BJ (cell line): ENCODE measurements at regions of chr17 and their contacts with region 1.

Region 1: GRCh38 chr17:67212689-67213417 is 32.1 kb downstream of the HELZ start:
- DNase-seq: no peak
- H3K4me3 ChIP-seq: no peak overlapping the region
- H3K27me3 ChIP-seq: no peaks in the 10 kb centered on the region
- CTCF ChIP-seq: no peak

Region 2: DNA sequence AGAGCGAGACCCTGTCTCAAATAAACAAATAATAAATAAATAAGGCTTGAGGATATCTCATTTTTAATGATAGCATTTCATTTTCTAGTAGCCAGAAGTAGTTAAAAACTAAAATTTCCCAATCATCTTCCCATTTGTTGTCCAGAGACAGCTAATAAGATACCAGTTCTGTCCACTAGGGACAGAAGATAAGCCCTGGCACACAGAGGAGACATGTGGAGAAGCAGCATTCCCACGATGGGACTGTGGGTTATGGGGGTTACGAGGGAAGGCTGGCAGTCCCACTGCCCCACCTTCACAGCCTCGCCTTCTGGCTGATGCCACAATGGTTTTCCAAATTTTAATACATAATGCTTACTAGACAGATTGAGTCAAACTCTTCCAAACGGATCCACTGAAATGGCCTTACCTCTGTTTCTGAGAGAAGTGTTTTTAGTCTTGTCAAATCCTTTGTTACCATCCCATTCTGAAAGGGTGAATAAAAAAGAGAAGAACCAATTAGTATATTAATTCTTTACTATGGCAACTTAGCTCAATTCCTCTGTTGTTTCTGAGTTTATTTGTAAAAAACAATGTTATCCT is 12.0 kb before region 1 on chr17:
- CTCF ChIA-PET with region 1: interaction called, 11 read pairs
- POLR2A ChIA-PET with region 1: no interaction called
- DNase-seq: no peak
- H3K4me3 ChIP-seq: no peak overlapping the region
- H3K27me3 ChIP-seq: no peaks in the 10 kb centered on the region
- CTCF ChIP-seq: peak; percentile 44